ENCODE measurements at regions of chr1 and their contacts with region 1.

Region 1: DNA sequence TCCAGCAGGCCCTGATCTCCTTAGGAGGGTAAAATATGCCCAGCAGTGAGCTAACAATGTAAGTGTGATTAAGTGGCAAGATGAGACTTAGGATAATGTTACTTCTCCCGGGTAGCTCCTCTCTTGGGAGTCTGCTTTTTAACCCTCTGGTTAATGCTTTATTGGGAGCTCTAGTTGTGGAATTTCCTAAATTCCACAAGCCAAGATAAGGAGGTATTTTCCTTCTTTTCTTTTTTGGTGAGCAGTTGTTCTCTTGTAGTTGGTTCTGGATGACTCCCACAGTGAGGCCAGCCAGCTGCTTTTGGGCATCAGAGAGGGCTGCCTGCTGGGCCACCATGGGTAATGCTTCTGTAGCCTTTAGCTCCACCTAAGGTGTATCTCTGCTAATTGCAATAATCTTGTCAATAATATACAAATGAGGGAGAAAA is 19.3 kb downstream of the C1orf52 start:
- DNase-seq: peak in 1 of 2 donors; percentile 17
- ATAC-seq: peak in 4 of 8 donors; percentile 42 to 73 (median 50)
- H3K4me3 ChIP-seq: no peak overlapping the region
- H3K27ac ChIP-seq: no peak overlapping the region
- H3K4me1 ChIP-seq: peaks cover 0 to 20% (median 9%) of the 10 kb centered on the region in 9 donors
- H3K27me3 ChIP-seq: no peaks in the 10 kb centered on the region
- CTCF ChIP-seq: peak in 5 of 9 donors; percentile 18 to 45 (median 41)

Region 2: DNA sequence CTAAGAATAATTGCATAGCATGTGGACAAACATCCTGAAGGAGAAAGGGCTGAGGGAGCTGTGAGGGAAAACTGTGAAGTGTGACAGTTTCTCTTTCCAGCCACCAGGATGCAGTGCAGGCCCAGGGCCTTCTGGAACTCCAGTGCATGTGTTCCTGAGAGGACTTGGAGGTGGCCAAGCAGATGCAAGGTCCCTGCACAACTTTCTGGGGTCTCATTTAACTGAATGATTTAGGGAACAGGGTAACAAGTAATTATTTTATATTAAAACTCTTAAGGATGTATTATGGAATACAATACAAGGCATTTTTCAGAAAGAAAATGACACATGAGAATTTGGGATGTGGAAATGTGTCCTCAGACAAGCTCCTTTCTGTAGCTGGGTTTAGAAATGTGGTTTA is 130.7 kb before region 1 on chr1:
- intact Hi-C with region 1: loop called in 4 of 10 experiments (anchors 5 to 10 kb)
- DNase-seq: peak; percentile 32 to 38
- ATAC-seq: peak in 7 of 8 donors; percentile 77 to 93 (median 88)
- H3K4me3 ChIP-seq: no peak overlapping the region
- H3K27ac ChIP-seq: no peak overlapping the region
- H3K4me1 ChIP-seq: no peaks in the 10 kb centered on the region
- H3K27me3 ChIP-seq: no peaks in the 10 kb centered on the region
- CTCF ChIP-seq: peak; percentile 42 to 78 (median 74)